ENCODE measurements at regions of chr2 and their contacts with region 1.

Region 1: GRCh38 chr2:160324161-160324800 is 124.2 kb upstream of the ITGB6 start:
- DNase-seq: peak; percentile 14 to 61 (median 45)
- ATAC-seq: no peak
- H3K4me3 ChIP-seq: no peak overlapping the region
- H3K4me3 Mint-ChIP-seq: no peak overlapping the region
- H3K27ac ChIP-seq: no peak overlapping the region
- H3K27ac Mint-ChIP-seq: no peak overlapping the region
- H3K4me1 ChIP-seq: peaks cover 53% of the 10 kb centered on the region
- H3K4me1 Mint-ChIP-seq: peaks cover 86% of the 10 kb centered on the region
- H3K27me3 ChIP-seq: no peaks in the 10 kb centered on the region
- H3K27me3 Mint-ChIP-seq: no peaks in the 10 kb centered on the region
- CTCF ChIP-seq: peak; percentile 54

Region 2: DNA sequence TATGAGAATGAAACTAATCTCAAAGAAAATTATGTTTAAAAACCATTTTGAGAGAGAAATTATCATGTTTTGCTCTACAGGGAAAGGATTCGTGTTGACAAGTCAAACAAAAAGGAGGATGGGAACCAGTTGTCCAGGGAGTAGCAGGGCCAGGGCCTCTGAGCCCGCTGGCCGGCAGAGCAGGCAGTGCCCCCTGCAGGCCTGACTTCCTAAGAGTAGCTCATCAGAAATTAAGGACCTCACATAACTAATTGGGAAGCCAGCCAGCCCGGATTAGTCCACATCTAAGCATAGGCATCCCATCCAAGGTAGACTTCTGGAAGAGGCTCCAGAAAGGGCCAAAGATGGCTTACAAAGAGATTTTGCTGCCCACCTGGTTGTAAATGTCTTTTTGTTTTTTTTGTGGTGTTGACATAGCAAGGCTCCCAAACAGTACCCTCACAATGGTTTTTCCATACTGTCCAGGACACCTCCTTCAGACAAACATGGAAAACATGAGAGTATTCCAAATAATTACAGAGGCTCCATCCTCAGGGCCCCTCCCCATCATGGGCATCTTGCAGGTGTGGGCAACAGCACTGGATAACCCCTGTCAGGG is 594.7 kb after region 1 on chr2:
- CTCF ChIA-PET with region 1: interaction called, 3 read pairs
- POLR2A ChIA-PET with region 1: no interaction called
- intact Hi-C with region 1: loop called in 1 of 2 experiments (anchors 1 kb)
- DNase-seq: peak in 6 of 9 experiments; percentile 10 to 56 (median 36)
- ATAC-seq: no peak
- H3K4me3 ChIP-seq: no peak overlapping the region
- H3K4me3 Mint-ChIP-seq: no peak overlapping the region
- H3K27ac ChIP-seq: no peak overlapping the region
- H3K27ac Mint-ChIP-seq: no peak overlapping the region
- H3K4me1 ChIP-seq: no peaks in the 10 kb centered on the region
- H3K4me1 Mint-ChIP-seq: no peaks in the 10 kb centered on the region
- H3K27me3 ChIP-seq: no peaks in the 10 kb centered on the region
- H3K27me3 Mint-ChIP-seq: no peaks in the 10 kb centered on the region
- CTCF ChIP-seq: peak; percentile 14

Region 3: GRCh38 chr2:160970052-160970965 is 646.0 kb after region 1 on chr2:
- CTCF ChIA-PET with region 1: interaction called, 13 read pairs
- POLR2A ChIA-PET with region 1: no interaction called
- intact Hi-C with region 1: loop called (anchors 2 to 5 kb)
- DNase-seq: peak in 2 of 9 experiments; percentile 35 to 41
- ATAC-seq: no peak
- H3K4me3 ChIP-seq: no peak overlapping the region
- H3K4me3 Mint-ChIP-seq: no peak overlapping the region
- H3K27ac ChIP-seq: no peak overlapping the region
- H3K27ac Mint-ChIP-seq: no peak overlapping the region
- H3K4me1 ChIP-seq: no peaks in the 10 kb centered on the region
- H3K4me1 Mint-ChIP-seq: no peaks in the 10 kb centered on the region
- H3K27me3 ChIP-seq: no peaks in the 10 kb centered on the region
- H3K27me3 Mint-ChIP-seq: no peaks in the 10 kb centered on the region
- CTCF ChIP-seq: peak; percentile 40

Region 4: DNA sequence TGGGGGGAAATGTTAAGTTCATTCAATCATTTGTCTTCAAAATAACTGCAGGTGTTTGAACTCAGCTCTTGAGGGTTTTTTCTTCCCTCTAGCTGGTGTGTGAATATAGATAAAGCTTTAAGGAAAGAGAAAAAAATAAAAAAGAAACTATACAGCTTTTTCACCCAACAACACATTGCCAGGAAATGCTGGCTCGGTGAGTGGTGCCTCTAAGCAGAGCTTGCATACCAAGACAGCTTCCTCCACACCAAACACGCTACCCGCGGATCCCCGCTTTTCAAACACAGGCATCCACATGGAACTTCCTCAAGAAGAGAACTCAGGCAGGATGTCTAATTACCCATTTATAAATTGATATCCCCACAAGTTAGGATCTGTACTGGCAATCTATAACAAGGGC is 766.1 kb after region 1 on chr2:
- CTCF ChIA-PET with region 1: no interaction called
- POLR2A ChIA-PET with region 1: no interaction called
- intact Hi-C with region 1: no loop called
- DNase-seq: peak in 7 of 9 experiments; percentile 5 to 54 (median 30)
- ATAC-seq: peak; percentile 69
- H3K4me3 ChIP-seq: no peak overlapping the region
- H3K4me3 Mint-ChIP-seq: peak overlapping the region; percentile 66
- H3K27ac ChIP-seq: no peak overlapping the region
- H3K27ac Mint-ChIP-seq: peak overlapping the region; percentile 38
- H3K4me1 ChIP-seq: no peaks in the 10 kb centered on the region
- H3K4me1 Mint-ChIP-seq: peaks cover 22% of the 10 kb centered on the region
- H3K27me3 ChIP-seq: no peaks in the 10 kb centered on the region
- H3K27me3 Mint-ChIP-seq: no peaks in the 10 kb centered on the region
- CTCF ChIP-seq: no peak

Measured in CD8-positive, alpha-beta T cell (primary cell).